Activated CD8-positive, alpha-beta memory T cell treated with anti-CD3 and anti-CD28 coated beads, Interleukin-2, amount 10 ng/mL, durations not matched to agents 7 days and 5 days (primary cell): ENCODE measurements at regions of chr3 and their contacts with region 1.

Region 1: DNA sequence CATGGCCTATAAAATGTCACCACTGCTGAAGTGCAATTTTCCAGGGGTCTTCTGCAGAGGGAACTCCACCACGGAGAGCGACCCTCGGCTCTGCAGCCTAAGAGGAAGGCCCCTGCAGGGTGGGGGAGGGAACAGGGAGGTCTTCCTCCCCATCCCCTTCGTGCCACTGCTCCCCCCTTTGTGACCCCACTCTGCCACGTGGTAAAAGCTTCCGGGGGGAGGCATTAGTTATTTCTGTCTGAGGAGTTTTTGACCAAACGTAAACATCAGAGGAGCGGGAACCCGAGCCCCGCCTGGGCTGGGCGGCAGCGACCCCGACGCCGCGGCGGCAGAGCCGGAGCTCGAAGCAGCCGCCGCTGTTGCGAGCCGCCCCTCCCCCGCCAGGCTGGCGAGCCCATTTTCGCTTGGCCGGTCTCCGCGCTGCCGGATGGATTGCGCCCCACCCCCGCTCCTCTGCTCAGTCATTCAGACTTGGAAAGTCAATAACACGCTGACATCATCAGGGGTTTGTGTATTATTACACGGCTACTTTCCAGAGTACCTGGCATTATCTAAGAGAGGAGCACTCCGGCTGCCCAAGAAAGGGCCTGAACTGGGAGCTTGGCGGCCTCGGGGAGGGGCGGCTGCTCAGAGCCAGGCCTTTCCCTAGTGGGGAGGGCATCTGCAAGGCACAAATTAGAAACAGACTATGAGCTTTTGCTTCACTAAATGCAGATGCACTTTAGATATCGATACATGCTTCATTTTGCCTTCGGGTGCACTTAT is 162.5 kb upstream of the TBL1XR1 start:
- DNase-seq: peak; percentile 94
- ATAC-seq: peak; percentile 81
- H3K4me3 Mint-ChIP-seq: peak overlapping the region; percentile 68
- H3K27ac Mint-ChIP-seq: peak overlapping the region; percentile 92
- H3K4me1 Mint-ChIP-seq: peaks cover 42% of the 10 kb centered on the region
- H3K27me3 Mint-ChIP-seq: no peaks in the 10 kb centered on the region

Region 2: DNA sequence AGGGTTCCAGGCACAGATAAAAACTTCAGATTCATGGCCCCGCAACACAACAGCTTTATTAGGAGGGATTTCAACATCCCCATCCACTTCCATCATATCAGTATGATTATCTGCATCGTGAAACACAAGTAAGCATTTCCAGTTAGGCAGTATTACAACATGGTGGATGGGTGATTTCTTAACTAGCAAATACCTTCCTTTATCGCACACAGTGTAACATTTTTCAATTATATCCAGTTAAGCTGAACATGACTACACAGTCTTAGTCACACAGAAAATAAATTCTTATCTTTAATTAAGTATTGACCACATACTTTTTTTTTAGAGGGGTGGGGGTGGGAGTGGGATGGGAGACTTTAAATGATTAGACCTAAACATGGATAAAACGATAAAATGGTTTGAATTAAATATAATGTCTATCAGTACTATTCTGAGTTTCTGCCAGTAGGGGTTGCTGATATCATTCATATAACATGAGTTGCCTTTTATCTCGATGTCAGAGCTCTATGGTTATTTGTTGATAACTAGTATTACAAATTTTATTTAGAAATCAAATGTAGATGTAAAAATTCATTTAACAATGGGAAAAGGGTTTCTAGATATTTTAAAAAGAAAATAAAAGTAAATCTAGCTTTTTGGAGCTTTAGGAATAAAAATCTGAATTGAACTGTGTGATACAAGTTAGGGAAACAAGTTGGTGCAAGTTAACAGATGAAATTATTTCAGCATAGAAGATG is 309.1 kb before region 1 on chr3:
- CTCF ChIA-PET with region 1: interaction called, 11 read pairs
- DNase-seq: no peak
- ATAC-seq: peak; percentile 64
- H3K4me3 Mint-ChIP-seq: no peak overlapping the region
- H3K27ac Mint-ChIP-seq: peak overlapping the region; percentile 37
- H3K4me1 Mint-ChIP-seq: peaks cover 12% of the 10 kb centered on the region
- H3K27me3 Mint-ChIP-seq: no peaks in the 10 kb centered on the region

Region 3: DNA sequence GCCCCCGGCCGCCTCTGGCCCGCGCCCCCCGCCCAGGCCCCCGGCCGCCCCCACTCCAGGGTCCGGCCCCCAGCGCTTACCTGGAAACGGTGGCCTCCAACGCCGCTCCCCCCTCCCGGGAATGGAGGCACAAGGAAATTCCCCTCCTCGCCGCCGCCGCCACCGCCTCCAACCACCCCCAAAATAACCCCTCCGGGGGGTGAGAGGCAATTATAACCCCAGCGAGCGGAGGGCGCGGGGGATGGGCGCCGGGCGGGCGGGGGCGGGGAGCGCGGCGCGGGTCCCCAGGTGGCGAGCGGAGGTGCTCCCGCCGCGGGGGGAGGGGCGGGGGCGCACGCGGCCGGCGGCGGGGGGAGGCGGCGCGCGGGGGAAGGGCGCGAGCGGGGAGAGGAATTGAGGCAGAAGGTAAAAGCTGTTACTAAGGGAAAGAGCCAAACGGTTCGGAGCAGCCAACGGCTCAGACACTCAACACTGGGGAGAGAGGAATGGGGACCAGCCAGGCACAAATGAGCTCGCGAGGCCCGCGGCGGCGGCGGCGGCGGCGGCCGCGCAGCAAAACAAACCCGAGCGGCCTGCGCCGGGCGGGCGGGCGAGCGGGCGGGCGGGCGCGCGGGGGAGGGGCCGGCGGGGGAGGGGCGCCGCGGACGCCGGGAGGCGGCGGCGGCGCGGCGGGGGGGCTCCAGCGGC is 162.6 kb before region 1 on chr3 and contains the start of gene TBL1XR1:
- CTCF ChIA-PET with region 1: interaction called, 45 read pairs
- DNase-seq: peak; percentile 91
- ATAC-seq: peak; percentile 59
- H3K4me3 Mint-ChIP-seq: peak within 1 kb of the TSS; percentile 95
- H3K27ac Mint-ChIP-seq: peak within 1 kb of the TSS; percentile 95
- H3K4me1 Mint-ChIP-seq: peaks cover 54% of the 10 kb centered on the region
- H3K27me3 Mint-ChIP-seq: no peaks in the 10 kb centered on the region
- total RNA-seq, gene TBL1XR1: 143 to 214 TPM

Region 4: GRCh38 chr3:177345049-177345972 is 14.5 kb before region 1 on chr3:
- CTCF ChIA-PET with region 1: interaction called, 11 read pairs
- DNase-seq: peak; percentile 87
- ATAC-seq: peak; percentile 97
- H3K4me3 Mint-ChIP-seq: peak overlapping the region; percentile 6
- H3K27ac Mint-ChIP-seq: peak overlapping the region; percentile 86
- H3K4me1 Mint-ChIP-seq: peaks cover 20% of the 10 kb centered on the region
- H3K27me3 Mint-ChIP-seq: no peaks in the 10 kb centered on the region

Region 5: DNA sequence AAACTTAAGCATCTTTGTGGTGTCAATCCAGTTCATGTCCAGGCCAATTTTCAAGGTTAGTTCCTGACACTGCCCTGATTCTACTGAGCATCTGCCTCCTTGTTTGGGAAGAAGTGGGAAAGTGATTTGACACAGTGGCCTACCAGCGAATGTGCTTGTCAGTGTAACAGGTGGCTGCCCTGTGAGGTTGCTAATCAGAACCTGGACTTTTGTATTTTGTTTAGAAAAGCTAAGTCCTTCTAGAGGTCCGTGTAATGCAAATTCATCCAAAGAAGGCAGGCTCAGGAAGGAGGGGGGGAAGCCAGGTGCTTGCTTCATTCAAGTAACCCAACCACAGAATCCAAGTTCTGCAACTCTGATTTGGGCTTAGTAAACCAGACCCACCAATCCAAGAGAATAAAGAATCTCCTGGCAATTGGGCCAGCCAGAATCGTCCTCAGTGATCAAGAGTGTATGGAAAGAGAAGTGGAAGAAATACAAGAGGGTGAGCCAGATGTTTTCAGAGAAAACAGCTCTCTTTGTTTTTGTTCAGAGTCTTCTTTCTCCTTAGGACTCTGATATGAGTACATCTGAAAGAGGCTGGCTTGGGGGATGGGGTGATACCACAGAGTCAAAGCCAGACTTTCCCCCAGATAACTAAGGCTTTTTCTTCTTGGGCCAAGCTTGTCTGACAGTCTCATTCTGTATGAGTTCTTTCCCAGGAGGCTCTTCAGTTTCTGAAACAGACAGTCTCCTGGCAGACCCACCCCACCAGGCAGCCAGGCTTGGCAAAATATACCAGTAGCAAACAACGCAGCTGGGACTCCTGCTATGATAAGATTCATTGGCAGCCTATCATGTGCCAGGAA is 346.4 kb after region 1 on chr3:
- CTCF ChIA-PET with region 1: no interaction called
- DNase-seq: no peak
- ATAC-seq: no peak
- H3K4me3 Mint-ChIP-seq: no peak overlapping the region
- H3K27ac Mint-ChIP-seq: no peak overlapping the region
- H3K4me1 Mint-ChIP-seq: no peaks in the 10 kb centered on the region
- H3K27me3 Mint-ChIP-seq: no peaks in the 10 kb centered on the region